Astrocyte of the cerebellum (primary cell): ENCODE measurements at regions of chr10 and their contacts with region 1.

Region 1: GRCh38 chr10:132654702-132655661 is 117.4 kb downstream of the INPP5A start:
- DNase-seq: peak; percentile 33
- H3K4me3 ChIP-seq: no peak overlapping the region
- CTCF ChIP-seq: peak; percentile 96

Region 2: DNA sequence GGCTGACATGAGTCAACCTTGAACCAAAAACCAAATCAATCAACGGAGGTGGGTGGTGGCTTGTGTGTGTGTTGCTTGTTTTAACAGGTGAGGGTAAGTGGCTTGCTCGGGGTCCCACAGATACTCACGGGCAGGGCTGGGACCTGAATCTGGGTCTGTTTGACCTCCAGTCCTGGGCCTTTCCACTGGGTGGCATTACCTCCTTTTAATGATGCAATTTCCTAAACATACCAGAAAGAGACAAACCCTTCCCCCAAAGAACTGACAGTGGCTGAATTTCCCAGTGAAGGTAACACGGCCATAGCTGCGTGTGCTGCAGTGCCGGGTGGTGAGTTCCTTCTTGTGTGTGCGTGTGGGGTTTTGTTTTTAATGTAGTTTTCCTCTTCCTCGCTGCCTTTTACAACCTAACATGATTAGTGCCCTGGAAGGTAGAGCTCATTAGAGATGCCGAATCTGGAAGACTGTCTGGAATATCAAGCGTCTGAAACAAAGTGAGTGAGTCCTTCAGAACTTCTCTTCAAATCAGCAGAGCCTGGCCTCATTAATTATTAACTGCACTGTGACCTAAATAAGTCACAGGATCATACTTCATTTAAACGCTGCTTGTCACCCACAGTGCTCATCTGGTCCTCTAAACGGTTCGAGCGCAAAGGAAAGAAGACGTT is 1177.4 kb before region 1 on chr10:
- in situ Hi-C with region 1: no loop called
- DNase-seq: no peak
- H3K4me3 ChIP-seq: no peak overlapping the region
- CTCF ChIP-seq: no peak

Region 3: DNA sequence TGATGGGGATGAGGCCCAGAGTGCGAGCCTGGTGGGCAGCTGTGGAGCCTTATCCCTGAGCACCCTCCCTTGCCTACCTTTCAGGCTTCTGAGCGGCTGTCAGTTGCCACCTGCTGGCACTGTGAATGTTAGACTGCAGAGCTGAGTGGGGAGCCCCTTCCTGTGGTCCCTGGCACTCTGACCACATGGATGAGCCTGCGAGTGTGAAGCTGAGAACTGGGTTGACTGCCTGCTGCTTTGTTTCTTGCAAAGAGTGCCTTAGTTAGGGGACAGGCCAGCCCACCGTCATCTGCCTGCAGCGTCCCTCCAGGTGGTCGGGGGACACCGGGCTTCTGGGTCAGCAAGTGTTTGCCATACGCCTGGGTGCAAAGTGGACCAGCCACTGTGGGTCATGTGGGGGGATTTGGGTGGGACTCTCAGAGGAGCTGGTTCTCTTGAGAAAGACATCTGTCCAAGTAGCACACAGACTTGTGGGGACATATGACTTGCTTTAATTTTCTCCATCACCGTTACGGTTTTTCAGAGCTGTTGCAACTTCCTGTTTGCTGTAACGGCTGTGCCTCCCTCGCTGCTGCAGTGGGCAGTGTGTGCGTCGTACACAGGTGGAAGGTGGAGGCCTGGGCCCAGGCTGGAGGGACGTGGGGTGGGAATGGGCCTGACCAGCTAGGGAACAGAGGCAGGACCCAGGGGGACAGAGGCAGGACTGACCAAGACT is 103.7 kb before region 1 on chr10:
- in situ Hi-C with region 1: no loop called
- DNase-seq: no peak
- H3K4me3 ChIP-seq: no peak overlapping the region
- CTCF ChIP-seq: no peak

Region 4: DNA sequence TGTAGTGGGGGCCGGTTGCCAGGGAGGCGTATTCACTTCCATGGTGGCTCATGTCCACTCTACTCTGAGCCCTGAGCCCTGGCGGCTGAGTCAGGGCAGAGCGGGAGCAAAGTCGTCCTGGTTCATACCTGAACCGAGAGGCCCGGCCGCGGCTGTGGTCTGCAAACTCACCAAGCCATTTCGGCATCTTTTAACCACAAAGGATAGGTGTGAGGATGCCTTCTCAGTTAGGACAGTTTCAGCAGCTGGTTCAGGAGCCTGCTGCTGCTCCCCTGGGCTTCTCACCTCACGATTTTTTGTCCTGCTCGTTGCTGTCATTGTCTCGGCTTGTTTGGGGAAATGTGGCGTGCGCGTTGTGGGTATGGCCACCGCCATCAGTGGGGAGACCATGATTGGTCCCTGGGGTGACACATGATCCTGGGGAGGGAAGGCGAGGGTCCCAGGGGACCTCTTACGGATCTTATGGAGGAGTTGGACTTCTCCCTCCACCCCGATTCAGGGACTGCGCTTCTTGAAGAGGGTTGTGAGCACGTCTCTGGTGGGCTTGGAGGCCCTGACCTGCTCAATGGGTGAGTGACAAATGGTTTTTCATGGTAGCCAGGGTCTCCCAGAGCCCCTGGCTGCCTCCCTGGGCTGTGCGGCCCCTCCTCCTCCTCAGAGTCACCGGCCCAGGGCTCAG is 91.0 kb before region 1 on chr10:
- in situ Hi-C with region 1: no loop called
- DNase-seq: no peak
- H3K4me3 ChIP-seq: no peak overlapping the region
- CTCF ChIP-seq: no peak

Region 5: GRCh38 chr10:132700156-132701098 is 45.4 kb after region 1 on chr10:
- in situ Hi-C with region 1: loop called (anchors 5 kb)
- DNase-seq: no peak
- H3K4me3 ChIP-seq: no peak overlapping the region
- CTCF ChIP-seq: no peak

Region 6: GRCh38 chr10:132714096-132714721 is 59.2 kb after region 1 on chr10:
- in situ Hi-C with region 1: no loop called
- DNase-seq: peak; percentile 50
- H3K4me3 ChIP-seq: peak overlapping the region; percentile 9
- CTCF ChIP-seq: no peak

Region 7: GRCh38 chr10:132929953-132930548 is 275.1 kb after region 1 on chr10:
- in situ Hi-C with region 1: loop called (anchors 10 kb)
- DNase-seq: no peak
- H3K4me3 ChIP-seq: no peak overlapping the region
- CTCF ChIP-seq: no peak